Heart left ventricle (tissue), 16 donors: ENCODE measurements at regions of chr17 and their contacts with region 1.

Region 1: DNA sequence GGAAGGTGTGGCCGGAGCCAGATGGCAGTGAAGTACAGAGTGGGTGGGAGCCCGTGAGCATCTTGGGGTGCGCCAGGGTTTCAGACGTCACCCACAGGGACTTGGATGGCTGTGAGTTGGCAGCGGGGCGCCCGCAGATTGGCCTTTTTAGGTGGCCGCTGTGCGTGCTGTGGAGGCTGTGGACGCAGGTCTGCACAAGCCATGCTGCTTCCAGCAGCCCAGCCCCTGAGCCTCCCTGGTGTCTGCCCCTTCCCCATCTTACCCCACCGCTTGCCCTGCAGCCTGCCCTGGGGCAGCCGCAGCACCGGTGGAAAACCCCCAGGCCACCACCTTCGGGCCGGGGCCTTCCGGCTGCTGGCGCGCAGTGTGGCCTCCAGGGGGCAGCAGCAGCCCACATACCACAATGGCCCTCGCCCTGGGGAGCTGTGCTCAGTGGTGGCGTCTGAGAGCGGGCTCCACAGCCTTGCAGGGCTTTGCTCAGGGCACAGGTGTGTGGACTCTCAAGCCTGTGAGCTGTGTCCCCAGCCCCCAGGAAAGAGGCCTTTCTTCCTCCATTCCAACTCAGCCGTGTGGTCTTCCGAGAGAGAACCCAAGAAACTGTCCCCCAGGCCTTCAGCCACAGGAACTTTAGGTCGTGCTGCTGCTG is 11.8 kb downstream of the ENDOV start:
- DNase-seq: peak; percentile 63 to 87 (median 75)
- ATAC-seq: peak; percentile 52 to 83 (median 80)
- H3K4me3 ChIP-seq: no peak overlapping the region
- H3K27ac ChIP-seq: no peak overlapping the region
- H3K4me1 ChIP-seq: peaks cover 0 to 20% (median 4%) of the 10 kb centered on the region in 12 donors
- H3K27me3 ChIP-seq: no peaks in the 10 kb centered on the region
- CTCF ChIP-seq: peak; percentile 91 to 99 (median 96)
- POLR2A ChIP-seq: no peak

Region 2: DNA sequence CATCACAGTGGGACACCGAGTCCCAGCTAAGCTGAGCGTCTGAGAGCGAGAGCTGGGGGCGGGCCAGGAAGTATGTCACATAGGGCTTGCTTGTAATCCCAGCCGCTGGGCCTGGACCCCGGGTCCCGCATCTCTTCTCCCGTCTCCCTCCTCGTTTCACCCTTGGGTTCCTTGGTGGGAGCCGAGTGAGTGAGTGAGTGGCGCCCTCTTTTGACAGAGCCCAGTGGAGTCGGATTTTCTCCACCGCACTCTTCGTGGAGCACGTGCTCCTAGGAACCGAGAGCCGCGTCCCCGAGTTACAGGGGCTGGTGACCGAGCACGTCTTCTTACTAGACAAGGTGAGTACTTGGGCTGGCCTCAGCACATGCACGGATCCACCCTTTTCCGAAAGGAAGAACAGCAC is 62.6 kb before region 1 on chr17:
- intact Hi-C with region 1: no loop called
- DNase-seq: peak in 1 of 5 donors; percentile 27
- ATAC-seq: peak in 2 of 4 donors; percentile 15 to 30
- H3K4me3 ChIP-seq: no peak overlapping the region
- H3K27ac ChIP-seq: no peak overlapping the region
- H3K4me1 ChIP-seq: peaks cover 0 to 15% (median 0%) of the 10 kb centered on the region in 12 donors
- H3K27me3 ChIP-seq: no peaks in the 10 kb centered on the region
- CTCF ChIP-seq: peak in 5 of 12 donors; percentile 14 to 45 (median 35)
- POLR2A ChIP-seq: no peak

Region 3: DNA sequence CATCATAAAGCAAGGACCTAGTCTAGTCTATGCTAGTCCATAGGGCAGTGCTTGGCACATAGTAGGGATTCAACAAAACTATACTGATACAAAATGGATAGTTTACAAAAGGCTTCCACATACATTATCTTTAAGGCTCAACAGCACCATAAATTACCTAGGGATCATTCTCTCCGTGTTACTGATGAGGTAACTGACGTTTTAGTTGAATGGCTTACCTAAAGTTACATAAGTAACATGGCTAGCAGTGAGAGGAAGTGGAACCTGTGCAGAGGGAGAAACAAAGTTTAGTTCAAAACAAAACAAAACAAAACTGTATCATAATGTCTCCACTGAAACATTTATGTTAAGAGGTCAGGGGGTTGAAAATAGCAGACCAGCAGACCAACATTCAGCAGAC is 125.7 kb after region 1 on chr17:
- intact Hi-C with region 1: loop called in 1 of 10 experiments (anchors 5 kb)
- DNase-seq: no peak
- ATAC-seq: no peak
- H3K4me3 ChIP-seq: no peak overlapping the region
- H3K27ac ChIP-seq: no peak overlapping the region
- H3K4me1 ChIP-seq: peaks cover 0 to 9% (median 3%) of the 10 kb centered on the region in 12 donors
- H3K27me3 ChIP-seq: no peaks in the 10 kb centered on the region
- CTCF ChIP-seq: no peak
- POLR2A ChIP-seq: no peak

Region 4: GRCh38 chr17:80575057-80575875 is 148.5 kb after region 1 on chr17:
- intact Hi-C with region 1: loop called in 7 of 10 experiments (anchors 2 to 10 kb)
- DNase-seq: peak; percentile 68 to 90 (median 74)
- ATAC-seq: peak in 3 of 4 donors; percentile 84 to 89 (median 86)
- H3K4me3 ChIP-seq: no peak overlapping the region
- H3K27ac ChIP-seq: no peak overlapping the region
- H3K4me1 ChIP-seq: no peaks in the 10 kb centered on the region
- H3K27me3 ChIP-seq: no peaks in the 10 kb centered on the region
- CTCF ChIP-seq: peak; percentile 80 to 100 (median 90)
- POLR2A ChIP-seq: no peak

Region 5: DNA sequence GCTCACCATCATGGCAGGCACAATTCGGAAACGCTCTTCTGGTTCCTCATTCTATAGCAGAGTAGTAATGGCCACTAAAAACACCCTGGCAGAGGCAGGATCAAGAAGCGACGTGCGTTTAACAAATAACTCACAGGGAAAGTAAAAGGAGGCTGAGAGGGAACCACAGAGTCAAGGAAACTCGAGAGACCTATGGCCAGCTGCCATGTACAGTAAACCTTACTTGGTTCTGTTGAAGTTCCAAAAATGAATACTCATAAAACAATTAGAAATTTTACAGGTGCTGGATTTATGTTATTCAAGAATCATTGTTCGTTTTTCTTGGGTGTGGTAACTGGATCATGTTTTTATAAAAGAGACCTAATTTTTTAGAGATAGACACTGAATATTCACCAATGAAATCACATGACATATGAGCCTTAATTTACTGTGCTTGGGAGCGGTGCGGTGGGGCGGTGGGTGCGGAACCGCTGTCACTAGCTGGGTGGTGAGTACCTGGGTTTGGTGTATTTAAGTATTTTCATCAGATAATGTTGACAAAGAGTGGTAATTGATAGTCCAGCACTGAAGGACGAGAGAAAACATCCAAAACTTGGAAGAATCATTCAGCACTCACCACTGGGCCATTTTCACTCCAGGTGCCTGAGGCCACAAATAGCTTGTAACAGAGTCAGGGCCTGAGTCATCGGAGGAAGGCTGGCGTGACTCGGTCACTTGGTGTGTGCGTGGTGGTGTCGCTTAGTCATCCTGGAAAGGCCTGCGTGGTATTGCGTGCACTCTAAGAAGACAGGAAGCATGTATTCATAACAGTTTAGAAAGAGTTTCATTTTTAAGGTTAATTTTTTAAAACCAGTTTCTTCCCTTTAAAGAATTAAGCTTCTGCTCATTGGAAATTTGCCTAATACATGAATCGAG is 429.4 kb after region 1 on chr17:
- intact Hi-C with region 1: loop called in 4 of 10 experiments (anchors 10 kb)
- DNase-seq: peak in 2 of 5 donors; percentile 40 to 72
- ATAC-seq: peak; percentile 57 to 85 (median 68)
- H3K4me3 ChIP-seq: no peak overlapping the region
- H3K27ac ChIP-seq: peak overlapping the region in 5 of 12 donors; percentile 14 to 74 (median 40)
- H3K4me1 ChIP-seq: peaks cover 0 to 38% (median 10%) of the 10 kb centered on the region in 12 donors
- H3K27me3 ChIP-seq: no peaks in the 10 kb centered on the region
- CTCF ChIP-seq: no peak
- POLR2A ChIP-seq: no peak

Region 6: DNA sequence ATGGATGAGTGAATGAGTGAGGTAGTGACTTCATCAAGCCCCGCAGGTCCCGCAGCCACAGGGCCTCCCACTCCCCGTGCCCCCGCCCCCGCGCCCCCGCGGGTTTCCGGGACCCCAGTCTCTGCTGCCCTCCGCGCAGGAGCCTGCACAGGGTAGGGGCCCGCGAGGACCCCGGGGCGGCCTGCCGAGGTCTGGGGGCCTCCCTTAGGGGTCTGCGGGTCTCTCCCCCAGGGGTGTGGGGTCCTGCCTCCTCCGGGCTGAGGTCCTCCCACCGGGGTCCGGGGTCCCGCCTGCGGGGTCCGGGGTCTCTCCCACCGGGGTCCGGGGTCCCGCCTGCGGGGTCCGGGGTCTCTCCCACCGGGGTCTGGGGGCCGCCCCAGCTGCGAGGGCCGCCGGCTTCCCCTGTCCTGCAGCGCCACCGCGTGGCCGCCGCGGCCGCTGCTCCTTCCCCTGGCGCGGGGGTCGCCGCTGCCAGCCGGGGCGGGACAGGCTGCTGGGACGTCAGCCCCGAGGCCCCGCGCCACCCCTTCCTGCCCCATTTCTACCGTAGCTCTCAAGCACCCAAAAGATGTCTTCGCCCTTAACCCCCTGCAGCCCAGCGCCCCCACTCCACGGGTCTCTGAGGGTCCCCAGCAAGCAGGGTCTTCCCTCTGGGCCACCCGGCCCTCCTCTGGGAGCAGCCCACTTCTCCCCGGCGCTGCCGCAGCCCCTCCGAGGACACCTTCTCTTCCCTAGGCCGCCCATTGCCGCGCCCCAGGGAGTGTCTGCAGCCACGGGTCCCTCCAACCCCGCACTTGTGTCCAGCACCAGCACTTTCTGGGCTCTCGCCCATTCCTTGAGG is 554.5 kb after region 1 on chr17:
- intact Hi-C with region 1: loop called (anchors 1 to 5 kb)
- DNase-seq: peak in 1 of 5 donors; percentile 62
- ATAC-seq: peak in 2 of 4 donors; percentile 31
- H3K4me3 ChIP-seq: peak overlapping the region in 3 of 12 donors; percentile 13 to 15 (median 13)
- H3K27ac ChIP-seq: no peak overlapping the region
- H3K4me1 ChIP-seq: peaks cover 0 to 18% (median 8%) of the 10 kb centered on the region in 12 donors
- H3K27me3 ChIP-seq: peaks cover 0 to 17% (median 10%) of the 10 kb centered on the region in 9 donors
- CTCF ChIP-seq: peak; percentile 69 to 93 (median 85)
- POLR2A ChIP-seq: no peak

Region 7: DNA sequence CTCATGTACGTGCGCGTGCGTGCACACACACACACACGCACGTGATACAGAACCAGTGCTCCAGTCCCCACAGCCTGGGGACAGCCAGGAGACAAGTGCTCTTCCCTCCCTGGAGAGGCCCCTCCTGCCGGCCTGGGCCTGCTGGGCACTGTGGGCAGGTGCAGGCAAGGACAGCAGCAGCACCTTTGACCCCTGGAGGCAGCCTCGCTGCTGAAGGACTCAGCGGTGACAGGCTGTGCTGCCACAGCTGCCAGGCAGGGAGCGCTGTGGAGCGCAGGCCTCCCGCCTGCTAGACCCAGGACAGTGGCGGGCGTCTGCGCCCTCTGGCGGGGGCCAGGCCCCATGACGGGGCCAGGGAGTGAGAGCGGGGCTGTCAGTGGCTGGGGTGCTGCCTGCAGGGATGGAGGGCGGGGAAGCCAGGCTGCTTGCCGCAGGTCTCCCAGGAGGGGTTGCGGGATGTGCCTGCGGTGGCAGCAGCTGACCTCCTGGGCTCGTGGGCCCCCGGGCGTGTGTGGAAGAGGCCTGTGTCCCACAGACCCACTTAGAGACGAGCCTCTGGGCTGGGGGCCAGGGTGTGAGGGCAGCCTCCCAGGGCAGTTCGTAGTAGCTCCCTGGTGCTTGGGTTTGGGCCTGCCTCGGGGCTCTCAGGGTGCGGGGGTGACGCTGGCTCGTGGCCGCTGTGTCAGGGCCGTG is 675.0 kb after region 1 on chr17:
- intact Hi-C with region 1: loop called in 5 of 10 experiments (anchors 5 to 10 kb)
- DNase-seq: peak; percentile 77 to 92 (median 82)
- ATAC-seq: peak; percentile 68 to 88 (median 86)
- H3K4me3 ChIP-seq: no peak overlapping the region
- H3K27ac ChIP-seq: no peak overlapping the region
- H3K4me1 ChIP-seq: peaks cover 0 to 27% (median 10%) of the 10 kb centered on the region in 12 donors
- H3K27me3 ChIP-seq: no peaks in the 10 kb centered on the region
- CTCF ChIP-seq: peak; percentile 98 to 100 (median 100)
- POLR2A ChIP-seq: no peak